Aorta (tissue), 5 donors: ENCODE measurements at regions of chr13 and their contacts with region 1.

Region 1: GRCh38 chr13:30679483-30680330 is 55.6 kb upstream of the ALOX5AP start:
- DNase-seq: no peak
- ATAC-seq: peak; percentile 61
- H3K4me3 ChIP-seq: no peak overlapping the region
- H3K27ac ChIP-seq: no peak overlapping the region
- H3K4me1 ChIP-seq: no peaks in the 10 kb centered on the region
- H3K27me3 ChIP-seq: no peaks in the 10 kb centered on the region

Region 2: GRCh38 chr13:30792285-30793000 is 112.7 kb after region 1 on chr13:
- intact Hi-C with region 1: loop called in 1 of 2 experiments (anchors 5 kb)
- DNase-seq: peak; percentile 89 to 94
- ATAC-seq: peak; percentile 88
- H3K4me3 ChIP-seq: no peak overlapping the region
- H3K27ac ChIP-seq: no peak overlapping the region
- H3K4me1 ChIP-seq: no peaks in the 10 kb centered on the region
- H3K27me3 ChIP-seq: no peaks in the 10 kb centered on the region